Activated CD4-positive, alpha-beta memory T cell treated with anti-CD3 and anti-CD28 coated beads, Interleukin-2, amount 10 ng/mL, durations not matched to agents 7 days and 5 days (primary cell): ENCODE measurements at regions of chr12 and their contacts with region 1.

Region 1: GRCh38 chr12:120301962-120302815 is at the start of gene SIRT4:
- DNase-seq: peak; percentile 92
- H3K4me3 Mint-ChIP-seq: peak within 1 kb of the TSS; percentile 87
- H3K27ac Mint-ChIP-seq: peak within 1 kb of the TSS; percentile 59
- H3K4me1 Mint-ChIP-seq: peaks cover 9% of the 10 kb centered on the region
- H3K27me3 Mint-ChIP-seq: no peaks in the 10 kb centered on the region
- total RNA-seq, gene SIRT4: 1.6 to 1.7 TPM

Region 2: DNA sequence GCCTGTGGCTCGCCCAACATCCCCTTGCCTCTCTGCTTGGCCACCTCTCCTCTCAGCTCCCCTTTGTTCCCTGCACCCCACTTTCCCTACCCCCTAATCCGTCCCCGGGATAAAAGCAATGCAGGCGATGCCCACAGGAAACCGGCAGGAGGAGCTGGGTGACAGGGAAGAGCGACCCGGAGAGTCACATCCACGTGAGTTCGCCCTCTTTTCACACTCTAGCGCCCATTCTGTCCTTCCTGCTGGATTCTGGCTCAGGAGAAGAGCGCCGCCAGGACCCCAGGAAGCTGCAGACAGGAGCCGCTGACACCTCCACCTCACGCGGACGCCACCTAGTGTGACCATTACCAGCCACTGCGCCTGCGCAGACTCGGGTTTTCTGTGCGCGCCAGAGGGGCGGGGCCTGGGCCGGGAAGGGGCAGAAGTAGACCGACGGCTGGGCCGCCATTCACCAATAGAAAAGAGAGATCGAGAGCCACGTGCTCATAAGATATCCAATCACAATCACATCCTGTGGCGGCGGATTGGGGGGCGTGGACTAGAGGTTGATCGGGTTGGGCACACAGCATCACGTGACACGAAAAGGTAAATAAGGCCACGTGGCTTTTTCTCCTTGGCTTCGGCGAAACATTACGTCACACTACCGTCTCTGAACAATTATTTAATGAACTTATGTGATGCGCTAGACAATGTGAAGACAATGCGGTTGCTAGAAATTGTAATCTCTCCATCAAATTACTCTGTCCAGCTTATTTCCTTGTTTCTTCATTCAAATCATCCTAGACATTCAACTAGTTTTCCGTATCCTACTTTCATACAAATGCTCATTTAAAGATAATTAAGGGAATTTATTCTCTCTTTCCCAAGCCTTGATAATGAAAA is 15.3 kb after region 1 on chr12:
- CTCF ChIA-PET with region 1: interaction called, 25 read pairs
- POLR2A ChIA-PET with region 1: interaction called, 20 read pairs
- DNase-seq: peak; percentile 100
- H3K4me3 Mint-ChIP-seq: peak overlapping the region; percentile 80
- H3K27ac Mint-ChIP-seq: peak overlapping the region; percentile 78
- H3K4me1 Mint-ChIP-seq: peaks cover 14% of the 10 kb centered on the region
- H3K27me3 Mint-ChIP-seq: no peaks in the 10 kb centered on the region

Region 3: DNA sequence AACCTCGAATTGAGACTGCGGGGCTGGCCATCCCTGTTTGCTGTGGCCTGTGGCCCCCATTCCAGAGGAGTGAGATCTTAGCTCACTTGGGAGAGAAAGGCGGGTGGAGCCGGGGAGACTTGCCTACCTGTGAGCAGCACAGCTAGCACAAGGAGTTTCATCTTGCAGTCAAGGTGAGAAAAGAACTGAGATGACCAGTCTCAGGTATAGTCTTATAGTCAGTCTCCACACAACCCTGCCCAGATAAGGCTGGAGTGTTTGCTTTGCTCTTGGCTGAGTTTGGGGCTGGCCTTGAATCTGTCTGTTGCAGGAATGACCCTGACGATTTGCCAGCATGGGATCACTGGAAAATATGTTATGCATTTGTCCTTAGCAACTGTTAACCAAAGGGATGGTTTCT is 25.4 kb after region 1 on chr12 and contains the start of gene PLA2G1B:
- CTCF ChIA-PET with region 1: interaction called, 16 read pairs
- POLR2A ChIA-PET with region 1: no interaction called
- DNase-seq: no peak
- H3K4me3 Mint-ChIP-seq: no peak within 1 kb of the TSS
- H3K27ac Mint-ChIP-seq: no peak within 1 kb of the TSS
- H3K4me1 Mint-ChIP-seq: peaks cover 7% of the 10 kb centered on the region
- H3K27me3 Mint-ChIP-seq: peaks cover 3% of the 10 kb centered on the region
- total RNA-seq, gene PLA2G1B: not detected